ENCODE measurements at regions of chr2 and their contacts with region 1.

Region 1: GRCh38 chr2:176269319-176270099 is at the start of gene MTX2:
- DNase-seq: peak; percentile 62 to 86 (median 74)
- H3K4me3 ChIP-seq: peak within 1 kb of the TSS; percentile 93
- H3K27ac ChIP-seq: peak within 1 kb of the TSS in 1 of 2 donors; percentile 62
- H3K4me1 ChIP-seq: peaks cover 2% of the 10 kb centered on the region
- H3K27me3 ChIP-seq: no peaks in the 10 kb centered on the region
- CTCF ChIP-seq: peak in 2 of 3 donors; percentile 19 to 51
- EP300 ChIP-seq: no peak
- POLR2A ChIP-seq: peak; percentile 32
- total RNA-seq, gene MTX2: 15.2 to 24.4 (median 18.4) TPM

Region 2: GRCh38 chr2:176140513-176141317 is 128.8 kb before region 1 on chr2:
- intact Hi-C with region 1: loop called in 1 of 4 experiments (anchors 10 kb)
- DNase-seq: peak; percentile 84 to 90 (median 90)
- H3K4me3 ChIP-seq: peak overlapping the region; percentile 53
- H3K27ac ChIP-seq: peak overlapping the region; percentile 80 to 99
- H3K4me1 ChIP-seq: peaks cover 9% of the 10 kb centered on the region
- H3K27me3 ChIP-seq: no peaks in the 10 kb centered on the region
- CTCF ChIP-seq: peak; percentile 98 to 99 (median 98)
- EP300 ChIP-seq: no peak
- POLR2A ChIP-seq: no peak

Region 3: DNA sequence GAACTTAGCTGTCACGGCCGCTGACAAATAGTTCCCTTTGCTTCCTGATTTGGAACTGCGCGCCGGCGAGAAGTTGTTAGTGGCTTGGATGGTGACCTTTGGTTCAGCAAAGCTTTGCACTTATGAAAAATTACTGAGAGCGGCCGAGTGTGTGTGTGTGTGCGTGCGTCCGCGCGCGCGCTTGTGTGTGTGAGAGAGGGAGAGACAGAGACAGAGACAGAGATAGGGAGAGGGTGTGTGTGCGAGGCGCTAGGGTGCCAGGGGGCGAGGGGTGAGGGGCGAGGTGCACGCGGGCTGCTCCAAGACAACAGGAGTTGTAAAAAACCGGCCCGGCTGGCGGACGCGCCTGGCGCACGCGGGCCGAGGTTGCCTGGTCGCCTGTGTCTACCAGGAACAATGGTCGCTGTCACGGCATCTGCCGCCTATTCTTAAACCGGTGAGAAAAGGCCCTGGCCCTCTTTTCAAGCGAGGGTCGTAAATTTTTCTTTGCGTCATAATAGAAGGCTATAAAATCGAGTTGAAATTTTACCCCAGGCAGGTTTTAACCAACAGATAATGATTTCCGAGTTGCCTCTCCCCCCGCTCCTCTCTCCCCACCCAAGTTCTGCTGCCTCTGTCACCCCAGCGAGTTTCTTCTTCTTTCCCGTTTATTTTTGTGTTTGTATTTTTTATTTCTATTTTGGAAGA is 111.9 kb before region 1 on chr2:
- intact Hi-C with region 1: no loop called
- DNase-seq: peak in 2 of 5 donors; percentile 16 to 27
- H3K4me3 ChIP-seq: peak overlapping the region; percentile 42
- H3K27ac ChIP-seq: no peak overlapping the region
- H3K4me1 ChIP-seq: no peaks in the 10 kb centered on the region
- H3K27me3 ChIP-seq: no peaks in the 10 kb centered on the region
- CTCF ChIP-seq: no peak
- EP300 ChIP-seq: no peak
- POLR2A ChIP-seq: no peak

Measured in ovary (tissue), 10 donors.